CD4-positive, alpha-beta memory T cell (primary cell): ENCODE measurements at regions of chr16 and their contacts with region 1.

Region 1: GRCh38 chr16:57023541-57024249 is 34.3 kb downstream of the NLRC5 start:
- DNase-seq: peak; percentile 77 to 91 (median 83)
- H3K4me3 ChIP-seq: peak overlapping the region; percentile 5 to 11
- H3K4me3 Mint-ChIP-seq: peak overlapping the region in 7 of 8 donors; percentile 54 to 84 (median 73)
- H3K27ac ChIP-seq: peak overlapping the region; percentile 58
- H3K27ac Mint-ChIP-seq: peak overlapping the region; percentile 87 to 94 (median 90)
- H3K4me1 ChIP-seq: peaks cover 92% of the 10 kb centered on the region
- H3K4me1 Mint-ChIP-seq: peaks cover 66 to 99% (median 82%) of the 10 kb centered on the region in 4 donors
- H3K27me3 ChIP-seq: no peaks in the 10 kb centered on the region
- H3K27me3 Mint-ChIP-seq: no peaks in the 10 kb centered on the region

Region 2: GRCh38 chr16:57000271-57001025 is 23.2 kb before region 1 on chr16:
- CTCF ChIA-PET with region 1: interaction called, 4 read pairs
- POLR2A ChIA-PET with region 1: interaction called, 10 read pairs
- intact Hi-C with region 1: no loop called
- DNase-seq: peak in 1 of 5 donors; percentile 77
- H3K4me3 ChIP-seq: peak overlapping the region; percentile 36 to 66
- H3K4me3 Mint-ChIP-seq: peak overlapping the region; percentile 71 to 90 (median 81)
- H3K27ac ChIP-seq: peak overlapping the region; percentile 79
- H3K27ac Mint-ChIP-seq: peak overlapping the region; percentile 89 to 98 (median 97)
- H3K4me1 ChIP-seq: peaks cover 95% of the 10 kb centered on the region
- H3K4me1 Mint-ChIP-seq: peaks cover 69 to 99% (median 84%) of the 10 kb centered on the region in 4 donors
- H3K27me3 ChIP-seq: no peaks in the 10 kb centered on the region
- H3K27me3 Mint-ChIP-seq: no peaks in the 10 kb centered on the region

Region 3: DNA sequence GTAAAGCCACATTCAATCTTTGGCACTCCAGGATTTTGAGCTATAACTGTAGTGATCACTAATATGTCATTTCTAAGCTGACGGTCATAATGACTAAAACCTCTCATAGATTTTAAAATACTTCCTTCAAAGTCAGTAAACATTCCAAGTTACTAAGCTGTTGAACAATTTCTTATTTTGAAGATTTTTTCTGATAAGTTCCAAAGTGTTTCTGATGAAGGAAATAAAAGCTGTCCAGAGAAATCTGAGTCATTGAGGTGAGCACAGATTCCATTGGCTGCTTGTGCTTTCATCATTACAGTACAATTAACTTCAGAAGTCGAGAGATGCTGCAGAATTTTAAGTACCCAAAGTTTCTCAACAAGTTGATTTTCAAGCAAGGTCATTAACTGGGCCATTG is 10.5 kb before region 1 on chr16:
- CTCF ChIA-PET with region 1: interaction called, 3 read pairs
- POLR2A ChIA-PET with region 1: interaction called, 18 read pairs
- intact Hi-C with region 1: loop called (anchors 1 kb)
- DNase-seq: no peak
- H3K4me3 ChIP-seq: no peak overlapping the region
- H3K4me3 Mint-ChIP-seq: peak overlapping the region in 6 of 8 donors; percentile 63 to 89 (median 78)
- H3K27ac ChIP-seq: peak overlapping the region; percentile 79
- H3K27ac Mint-ChIP-seq: peak overlapping the region; percentile 83 to 98 (median 97)
- H3K4me1 ChIP-seq: peaks cover 98% of the 10 kb centered on the region
- H3K4me1 Mint-ChIP-seq: peaks cover 52 to 90% (median 69%) of the 10 kb centered on the region in 4 donors
- H3K27me3 ChIP-seq: no peaks in the 10 kb centered on the region
- H3K27me3 Mint-ChIP-seq: no peaks in the 10 kb centered on the region

Region 4: DNA sequence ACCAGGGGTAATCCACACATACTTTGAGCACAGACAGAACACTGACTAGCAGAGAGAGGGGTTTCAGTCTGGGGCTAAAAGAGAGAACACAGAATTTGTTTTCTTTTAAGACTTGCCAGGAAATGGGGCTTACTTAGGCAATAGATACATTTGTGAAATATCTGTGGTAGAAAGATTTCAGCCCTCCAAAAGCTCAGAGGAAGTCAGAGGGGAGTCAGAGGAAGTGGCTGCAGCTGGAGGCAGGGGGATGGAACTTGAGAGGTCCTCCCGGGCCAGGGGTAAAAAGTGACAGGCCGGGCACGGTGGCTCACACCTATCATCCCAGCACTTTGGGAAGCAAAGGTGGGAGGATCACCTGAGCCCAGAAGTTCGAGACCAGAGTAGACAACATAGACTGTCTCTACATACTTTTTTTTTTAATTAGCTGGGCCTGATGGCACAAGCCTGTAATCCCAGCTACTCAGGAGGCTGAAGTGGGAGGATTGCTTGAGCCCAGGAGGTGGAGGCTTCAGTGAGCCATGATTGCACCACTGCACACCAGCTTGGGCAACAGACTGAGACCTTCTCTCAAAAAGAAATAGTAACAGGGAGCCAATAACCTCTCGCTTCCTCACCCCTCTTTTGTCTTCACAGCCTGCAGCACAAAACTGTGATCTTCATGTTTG is 15.6 kb after region 1 on chr16:
- CTCF ChIA-PET with region 1: interaction called, 28 read pairs
- POLR2A ChIA-PET with region 1: interaction called, 162 read pairs
- intact Hi-C with region 1: loop called (anchors 1 kb)
- DNase-seq: peak in 3 of 5 donors; percentile 20 to 34 (median 24)
- H3K4me3 ChIP-seq: peak overlapping the region in 1 of 2 donors; percentile 6
- H3K4me3 Mint-ChIP-seq: peak overlapping the region; percentile 32 to 90 (median 76)
- H3K27ac ChIP-seq: peak overlapping the region; percentile 73
- H3K27ac Mint-ChIP-seq: peak overlapping the region; percentile 88 to 98 (median 94)
- H3K4me1 ChIP-seq: peaks cover 95% of the 10 kb centered on the region
- H3K4me1 Mint-ChIP-seq: peaks cover 63 to 95% (median 81%) of the 10 kb centered on the region in 4 donors
- H3K27me3 ChIP-seq: no peaks in the 10 kb centered on the region
- H3K27me3 Mint-ChIP-seq: no peaks in the 10 kb centered on the region

Region 5: DNA sequence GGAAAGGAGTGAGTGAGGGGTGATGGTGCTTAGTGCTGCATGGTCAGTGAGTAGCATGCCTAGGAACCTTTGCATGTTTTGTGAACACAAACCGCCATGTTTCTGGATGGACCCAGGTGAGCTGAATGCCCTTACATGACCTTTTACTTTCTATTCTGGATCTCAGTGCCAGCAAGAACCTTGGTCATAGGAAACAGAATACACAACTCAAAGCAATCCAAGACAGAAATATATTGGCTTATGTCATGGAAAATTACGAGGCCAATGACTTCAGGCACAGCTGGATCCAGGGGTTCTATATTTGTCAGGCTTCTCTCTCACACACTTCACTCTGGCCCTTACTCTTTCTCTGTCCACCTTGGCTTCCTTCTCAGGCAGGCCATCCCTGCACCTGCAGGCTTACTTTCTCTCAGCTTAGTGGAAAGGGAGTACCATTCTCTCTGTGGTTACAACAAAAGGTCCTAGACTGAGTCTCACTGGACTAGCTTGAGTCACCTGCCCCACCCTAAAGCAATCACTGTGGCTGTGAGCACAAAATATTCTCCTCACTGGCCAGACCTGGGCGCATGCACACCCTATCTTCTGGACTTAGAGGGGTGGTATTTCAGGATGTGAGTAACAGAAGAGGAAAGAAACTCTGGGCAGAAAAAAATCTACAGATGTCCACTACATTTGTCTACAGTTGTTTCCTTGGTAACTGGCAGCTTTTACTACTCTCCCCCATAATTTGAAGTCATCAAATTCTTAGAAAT is 48.3 kb after region 1 on chr16:
- CTCF ChIA-PET with region 1: no interaction called
- POLR2A ChIA-PET with region 1: no interaction called
- intact Hi-C with region 1: no loop called
- DNase-seq: no peak
- H3K4me3 ChIP-seq: no peak overlapping the region
- H3K4me3 Mint-ChIP-seq: peak overlapping the region in 1 of 8 donors; percentile 41
- H3K27ac ChIP-seq: no peak overlapping the region
- H3K27ac Mint-ChIP-seq: peak overlapping the region; percentile 48 to 84 (median 62)
- H3K4me1 ChIP-seq: peaks cover 4% of the 10 kb centered on the region
- H3K4me1 Mint-ChIP-seq: peaks cover 4 to 7% (median 6%) of the 10 kb centered on the region in 4 donors
- H3K27me3 ChIP-seq: no peaks in the 10 kb centered on the region
- H3K27me3 Mint-ChIP-seq: no peaks in the 10 kb centered on the region